Heart right ventricle (tissue), 16 donors: ENCODE measurements at regions of chr12 and their contacts with region 1.

Region 1: DNA sequence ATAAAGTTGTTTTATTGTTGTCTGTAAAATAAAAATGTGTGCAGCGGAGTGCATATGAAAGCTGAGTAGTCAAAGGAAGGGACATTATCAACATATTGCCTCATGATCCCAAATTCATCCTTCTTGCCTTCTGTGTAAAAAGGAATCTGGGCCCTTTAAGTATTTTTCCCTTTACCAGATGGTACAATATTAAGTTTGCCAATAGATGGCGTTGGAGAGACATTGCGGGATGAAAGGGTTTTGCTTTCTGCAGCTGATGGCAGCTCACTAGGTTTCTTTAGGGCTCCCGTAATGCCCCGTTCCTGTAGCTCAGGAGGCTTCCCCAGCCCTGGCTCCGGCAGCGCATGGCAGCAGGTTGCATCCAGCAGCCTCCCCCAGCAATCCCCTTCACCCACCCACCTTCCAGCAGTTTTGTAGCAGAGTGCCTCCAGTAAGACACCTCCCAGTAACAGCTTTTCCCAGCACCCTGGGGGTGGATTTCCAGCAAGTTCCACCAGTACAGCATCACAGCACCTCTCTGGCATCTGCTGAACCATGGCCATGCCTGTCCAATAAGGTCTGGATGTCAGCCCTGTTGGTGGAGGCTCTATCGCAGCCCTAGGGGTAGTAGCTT is 354.4 kb downstream of the MED13L start:
- DNase-seq: no peak
- ATAC-seq: no peak
- H3K4me3 ChIP-seq: no peak overlapping the region
- H3K27ac ChIP-seq: no peak overlapping the region
- H3K4me1 ChIP-seq: no peaks in the 10 kb centered on the region
- H3K27me3 ChIP-seq: peaks cover 0 to 51% (median 34%) of the 10 kb centered on the region in 7 donors
- CTCF ChIP-seq: no peak

Region 2: GRCh38 chr12:113973109-113973904 is 1949.8 kb before region 1 on chr12:
- intact Hi-C with region 1: loop called in 1 of 10 experiments (anchors 10 kb)
- DNase-seq: no peak
- ATAC-seq: no peak
- H3K4me3 ChIP-seq: no peak overlapping the region
- H3K27ac ChIP-seq: no peak overlapping the region
- H3K4me1 ChIP-seq: no peaks in the 10 kb centered on the region
- H3K27me3 ChIP-seq: peaks cover 0 to 52% (median 45%) of the 10 kb centered on the region in 7 donors
- CTCF ChIP-seq: no peak